Astrocyte of the cerebellum (primary cell): ENCODE measurements at regions of chr1 and their contacts with region 1.

Region 1: GRCh38 chr1:201515895-201516294 is 9.0 kb upstream of the CSRP1 start:
- DNase-seq: no peak
- H3K4me3 ChIP-seq: no peak overlapping the region
- CTCF ChIP-seq: no peak

Region 2: GRCh38 chr1:201476670-201477344 is 39.1 kb before region 1 on chr1:
- in situ Hi-C with region 1: loop called (anchors 5 kb)
- DNase-seq: no peak
- H3K4me3 ChIP-seq: no peak overlapping the region
- CTCF ChIP-seq: no peak